ENCODE measurements at regions of chr18 and their contacts with region 1.

Region 1: DNA sequence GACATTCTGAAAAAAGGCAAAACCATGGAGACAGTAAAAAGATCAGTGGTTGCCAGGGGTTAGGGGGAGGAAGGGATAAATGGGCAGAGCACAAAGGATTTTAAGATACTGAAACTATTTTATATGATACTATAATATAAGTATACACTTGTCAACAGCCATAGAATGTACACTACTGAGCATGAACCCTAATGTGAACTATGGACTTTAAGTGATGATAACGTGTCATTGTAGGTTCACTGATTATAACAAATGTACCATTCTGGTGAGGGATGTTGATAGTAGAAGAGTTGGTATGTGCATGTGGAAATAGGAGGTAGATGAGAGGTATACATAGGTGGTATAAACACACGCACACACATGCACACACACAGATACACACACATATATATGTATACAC is 241.6 kb downstream of the NOL4 start:
- DNase-seq: no peak
- ATAC-seq: no peak
- H3K4me3 ChIP-seq: no peak overlapping the region
- H3K27ac ChIP-seq: no peak overlapping the region
- H3K4me1 ChIP-seq: no peaks in the 10 kb centered on the region
- H3K27me3 ChIP-seq: no peaks in the 10 kb centered on the region
- CTCF ChIP-seq: no peak

Region 2: GRCh38 chr18:33898427-33898826 is 84.7 kb before region 1 on chr18:
- intact Hi-C with region 1: loop called in 1 of 2 experiments (anchors 10 kb)
- DNase-seq: no peak
- ATAC-seq: no peak
- H3K4me3 ChIP-seq: no peak overlapping the region
- H3K27ac ChIP-seq: no peak overlapping the region
- H3K4me1 ChIP-seq: no peaks in the 10 kb centered on the region
- H3K27me3 ChIP-seq: no peaks in the 10 kb centered on the region
- CTCF ChIP-seq: no peak

Region 3: GRCh38 chr18:34097312-34097711 is 114.2 kb after region 1 on chr18:
- intact Hi-C with region 1: no loop called
- DNase-seq: peak in 1 of 4 donors; percentile 10
- ATAC-seq: no peak
- H3K4me3 ChIP-seq: no peak overlapping the region
- H3K27ac ChIP-seq: no peak overlapping the region
- H3K4me1 ChIP-seq: no peaks in the 10 kb centered on the region
- H3K27me3 ChIP-seq: no peaks in the 10 kb centered on the region
- CTCF ChIP-seq: no peak

Region 4: DNA sequence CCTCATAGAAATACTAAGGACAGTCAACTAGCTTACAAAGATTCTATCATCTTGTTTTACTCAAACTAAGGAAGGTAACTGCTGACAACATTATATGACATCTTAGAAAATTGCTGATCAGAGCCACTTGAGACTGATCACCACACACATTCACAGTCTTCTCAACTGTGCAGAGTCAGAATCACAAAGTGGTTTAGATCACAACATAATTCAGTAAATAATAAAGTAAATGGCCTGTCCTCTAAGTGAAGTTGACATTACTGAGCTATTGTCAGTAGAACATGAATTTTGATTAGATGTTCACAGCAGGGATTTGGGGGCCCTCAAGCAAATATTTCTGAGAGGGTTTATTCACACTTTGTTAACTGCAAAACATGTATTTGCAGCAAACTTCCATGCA is 213.1 kb after region 1 on chr18:
- intact Hi-C with region 1: no loop called
- DNase-seq: no peak
- ATAC-seq: no peak
- H3K4me3 ChIP-seq: no peak overlapping the region
- H3K27ac ChIP-seq: no peak overlapping the region
- H3K4me1 ChIP-seq: no peaks in the 10 kb centered on the region
- H3K27me3 ChIP-seq: no peaks in the 10 kb centered on the region
- CTCF ChIP-seq: no peak

Measured in left lung (tissue), 14 donors.